Activated T-helper 1 cell treated with anti-CD3 and anti-CD28 coated beads, Interleukin-12 subunit alpha, Interleukin-12 subunit beta, Interleukin-2, Interleukin-4 antibody, amounts not matched to agents 30 ng/mL and 10 ng/mL and 1 ng/mL, durations not matched to agents 14 hours and 24 hours and 36 hours (primary cell): ENCODE measurements at regions of chr10 and their contacts with region 1.

Region 1: DNA sequence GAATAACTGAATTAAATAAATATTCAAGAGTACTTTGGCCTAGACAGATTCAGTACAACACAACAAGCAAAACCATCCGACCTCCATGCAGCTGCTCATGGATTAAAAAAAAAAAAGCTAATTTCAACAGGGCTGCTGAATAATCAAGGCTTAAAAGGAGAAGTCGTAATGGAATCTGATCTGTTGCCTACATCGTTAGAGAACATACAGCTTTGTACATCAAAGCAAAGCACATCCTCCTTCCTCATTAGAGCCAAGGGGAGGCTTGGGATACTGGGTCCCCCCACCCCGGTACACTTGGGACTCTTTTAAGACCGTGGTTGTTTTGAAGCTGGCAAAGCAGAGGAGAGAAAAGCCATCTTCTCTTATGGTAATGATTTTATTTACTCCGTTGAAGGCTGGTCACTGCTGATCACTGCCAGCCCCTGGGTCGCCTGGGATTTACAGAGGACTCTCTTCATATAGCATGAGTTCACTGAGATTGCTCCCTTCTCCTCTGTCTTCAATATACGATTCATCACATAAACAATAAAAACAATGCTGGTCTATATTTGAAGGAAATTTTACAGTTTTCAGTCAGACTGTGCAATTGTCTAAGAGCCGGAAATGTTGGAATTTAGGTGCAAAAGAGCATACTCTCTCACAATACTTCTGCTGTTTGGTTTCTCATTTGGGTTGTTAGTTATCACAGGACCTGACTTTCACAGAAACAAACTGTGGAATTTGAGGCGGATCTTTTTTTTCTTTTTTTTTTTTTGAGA is 148.8 kb downstream of the FAM107B start:
- DNase-seq: no peak
- H3K4me3 Mint-ChIP-seq: no peak overlapping the region
- H3K27ac Mint-ChIP-seq: no peak overlapping the region
- H3K4me1 Mint-ChIP-seq: peaks cover 6% of the 10 kb centered on the region
- H3K27me3 Mint-ChIP-seq: peaks cover 3% of the 10 kb centered on the region

Region 2: GRCh38 chr10:14508725-14509124 is 117.2 kb before region 1 on chr10:
- intact Hi-C with region 1: no loop called
- DNase-seq: no peak
- H3K4me3 Mint-ChIP-seq: no peak overlapping the region
- H3K27ac Mint-ChIP-seq: no peak overlapping the region
- H3K4me1 Mint-ChIP-seq: peaks cover 36% of the 10 kb centered on the region
- H3K27me3 Mint-ChIP-seq: no peaks in the 10 kb centered on the region

Region 3: DNA sequence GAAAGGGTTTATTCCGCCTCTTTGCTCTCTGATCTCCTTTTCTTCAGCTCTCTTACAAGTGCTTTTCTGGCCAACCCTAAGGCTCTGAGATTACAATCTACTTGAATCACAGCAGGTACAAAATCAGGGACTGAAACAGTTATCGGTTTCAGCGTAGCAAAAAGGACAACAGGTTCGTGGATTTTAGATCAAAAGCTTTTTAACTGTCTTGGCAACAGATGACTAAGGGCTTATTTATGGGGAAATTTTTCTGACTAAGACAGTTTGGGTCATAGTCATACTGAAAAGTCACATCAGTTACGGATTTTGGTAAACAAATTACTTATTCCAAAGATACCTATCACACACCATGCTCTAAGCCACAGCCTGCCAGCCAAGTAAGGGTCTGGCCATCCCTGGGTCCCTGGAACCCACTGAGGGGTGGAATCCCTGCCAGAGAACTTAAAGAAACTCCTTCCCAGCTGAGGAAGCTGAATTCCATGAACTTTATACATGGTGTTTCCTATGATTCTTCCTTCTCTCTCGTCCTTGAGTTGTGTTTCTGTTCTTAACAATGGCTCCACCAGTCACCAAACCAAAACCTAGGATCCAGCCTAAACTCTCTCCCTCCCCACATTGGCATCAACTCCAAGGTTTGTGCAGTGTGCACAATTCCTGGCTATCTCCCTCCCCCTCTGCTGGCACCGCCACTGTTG is 20.6 kb before region 1 on chr10:
- intact Hi-C with region 1: no loop called
- DNase-seq: peak; percentile 54
- H3K4me3 Mint-ChIP-seq: peak overlapping the region; percentile 91
- H3K27ac Mint-ChIP-seq: peak overlapping the region; percentile 99
- H3K4me1 Mint-ChIP-seq: peaks cover 74% of the 10 kb centered on the region
- H3K27me3 Mint-ChIP-seq: no peaks in the 10 kb centered on the region

Region 4: DNA sequence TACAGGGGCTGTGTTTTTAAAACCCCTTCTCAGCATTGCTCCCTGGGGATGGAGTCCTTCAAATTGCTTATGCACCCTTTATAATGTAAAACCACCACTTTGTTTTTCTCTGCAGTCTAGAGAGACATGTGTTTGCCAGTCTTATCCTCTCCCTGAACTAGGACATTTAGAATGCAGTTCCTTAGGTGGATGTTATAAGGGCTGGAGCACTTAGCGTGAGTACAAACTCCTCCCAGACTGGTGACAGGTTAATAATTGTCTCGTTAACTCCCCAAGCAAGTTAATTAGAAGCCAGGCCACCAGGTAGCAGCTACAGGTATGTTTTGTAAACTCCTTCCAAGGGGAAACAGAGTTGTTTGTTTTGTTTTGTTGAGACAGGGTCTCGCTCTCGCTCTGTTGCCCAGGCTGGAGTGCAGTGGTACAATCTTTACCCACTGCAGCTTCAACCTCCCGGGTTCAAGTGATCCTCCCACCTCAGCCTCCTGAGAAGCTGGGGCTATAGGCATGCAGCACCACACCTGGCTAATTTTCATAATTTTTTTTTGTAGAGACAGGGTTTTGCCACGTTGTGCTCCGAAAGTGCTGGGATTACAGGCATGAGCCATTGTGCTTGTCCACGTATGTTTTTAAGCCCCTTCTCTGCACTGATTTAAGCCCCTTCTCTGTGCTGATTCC is 48.6 kb after region 1 on chr10:
- intact Hi-C with region 1: loop called (anchors 1 kb)
- DNase-seq: no peak
- H3K4me3 Mint-ChIP-seq: no peak overlapping the region
- H3K27ac Mint-ChIP-seq: no peak overlapping the region
- H3K4me1 Mint-ChIP-seq: peaks cover 13% of the 10 kb centered on the region
- H3K27me3 Mint-ChIP-seq: peaks cover 1% of the 10 kb centered on the region

Region 5: DNA sequence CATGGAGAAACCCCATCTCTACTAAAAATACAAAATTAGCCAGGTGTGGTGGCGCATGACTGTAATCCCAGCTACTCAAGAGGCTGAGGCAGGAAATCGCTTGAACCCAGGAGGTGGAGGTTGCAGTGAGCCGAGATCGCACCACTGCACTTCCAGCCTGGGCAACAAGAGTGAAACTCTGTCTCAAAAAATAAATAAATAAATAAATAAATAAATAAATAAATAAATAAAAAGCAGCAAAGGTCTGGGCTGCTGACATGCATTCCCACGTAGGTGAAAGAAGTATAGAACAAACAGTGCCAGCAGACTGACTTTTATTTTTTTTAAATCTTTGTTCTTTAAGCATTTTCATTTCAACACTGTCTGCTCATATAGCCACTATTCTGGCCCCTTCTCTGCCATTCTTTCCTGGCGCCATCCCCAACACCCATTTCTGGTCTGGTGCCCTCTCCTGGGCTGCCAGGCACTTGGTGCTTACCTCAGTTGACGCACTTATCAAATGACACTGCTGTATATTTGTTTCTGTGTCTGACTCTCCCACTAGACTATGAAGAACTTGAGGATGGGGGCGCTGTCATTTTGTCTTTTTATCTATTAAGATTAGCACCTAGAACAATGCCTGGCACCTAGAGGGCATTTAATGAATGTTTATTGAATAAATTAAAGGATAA is 133.2 kb after region 1 on chr10:
- intact Hi-C with region 1: no loop called
- DNase-seq: no peak
- H3K4me3 Mint-ChIP-seq: no peak overlapping the region
- H3K27ac Mint-ChIP-seq: no peak overlapping the region
- H3K4me1 Mint-ChIP-seq: peaks cover 8% of the 10 kb centered on the region
- H3K27me3 Mint-ChIP-seq: no peaks in the 10 kb centered on the region